ENCODE measurements at regions of chr15 and their contacts with region 1.

Region 1: DNA sequence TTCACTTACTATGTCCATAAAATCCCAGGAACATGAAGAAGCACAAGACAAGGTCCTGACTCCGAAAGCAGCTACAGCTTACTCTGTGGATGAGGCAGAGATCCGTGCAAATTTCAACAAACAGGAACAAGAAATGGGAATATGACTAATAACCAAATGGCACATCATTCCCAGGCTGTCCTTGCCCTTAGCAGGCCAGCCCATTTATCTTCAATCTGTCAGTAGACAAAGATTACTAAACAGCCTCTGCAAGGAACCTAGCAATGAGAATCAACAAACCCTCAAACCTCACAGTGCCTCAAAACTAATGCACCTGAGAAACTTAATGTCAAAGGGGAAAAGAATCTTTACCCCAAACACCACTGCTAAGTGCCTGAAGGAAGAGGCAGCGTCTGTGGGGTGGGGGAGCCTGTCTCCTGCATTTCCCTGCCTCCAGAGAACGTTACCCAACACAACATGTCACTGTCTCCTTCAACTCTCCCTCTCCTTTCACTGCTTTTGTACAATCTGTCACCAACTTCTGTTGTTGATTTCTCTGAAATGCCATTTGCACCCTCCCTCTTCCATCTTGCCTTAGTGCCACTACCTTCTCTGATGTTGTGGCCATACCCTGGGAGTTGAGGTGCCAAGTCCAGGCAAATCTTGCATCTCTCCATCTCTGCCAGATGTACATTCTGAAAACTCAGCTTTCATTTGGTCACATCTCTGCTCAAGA is 4.8 kb downstream of the TNFAIP8L3 start:
- DNase-seq: no peak
- CTCF ChIP-seq: no peak

Region 2: DNA sequence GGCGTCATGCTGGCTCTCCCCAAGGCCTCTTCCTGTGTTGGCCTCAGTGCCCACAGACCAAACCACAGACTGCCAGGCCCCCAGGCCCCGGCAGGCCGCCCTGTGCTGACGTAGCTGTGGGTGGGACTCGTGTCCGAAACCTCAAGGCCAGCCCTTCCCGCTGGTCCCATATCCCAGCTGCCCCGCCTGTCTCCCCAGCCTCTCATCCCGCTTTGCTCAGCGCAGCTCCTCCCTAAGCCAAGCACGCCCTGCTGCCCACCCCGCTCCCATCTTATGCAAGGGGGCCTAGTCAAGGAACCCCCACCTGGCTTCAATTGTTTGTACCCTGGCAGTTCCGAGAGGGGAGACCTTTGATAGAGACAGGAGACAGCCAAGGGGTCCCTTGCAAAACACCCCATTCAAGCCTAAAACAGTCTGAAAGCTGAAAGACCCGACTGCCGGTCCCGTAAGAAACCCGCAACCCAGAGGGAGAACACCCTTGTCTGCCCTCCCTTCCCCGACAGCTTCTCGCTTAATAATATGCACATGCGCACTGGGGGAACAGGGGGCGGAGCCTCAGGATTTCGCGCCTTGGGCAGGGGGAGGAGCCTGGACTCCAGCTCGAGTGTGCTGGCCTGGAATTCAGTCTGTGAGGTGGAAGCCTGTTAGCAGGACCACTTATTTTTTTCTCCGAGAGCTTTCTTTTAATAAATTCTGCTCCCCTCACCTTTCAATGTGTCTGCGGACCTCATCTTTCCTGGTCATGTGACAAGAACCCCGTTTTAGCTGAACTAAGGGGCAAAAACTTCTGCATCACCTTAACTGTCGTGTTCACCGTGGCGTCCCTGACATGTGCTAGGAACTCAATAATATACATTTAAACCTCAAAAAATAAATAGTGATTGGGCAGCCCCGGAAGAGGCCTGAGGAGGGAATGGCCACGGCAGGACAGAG is 12.4 kb before region 1 on chr15:
- CTCF ChIA-PET with region 1: interaction called, 14 read pairs
- POLR2A ChIA-PET with region 1: no interaction called
- DNase-seq: peak; percentile 81
- CTCF ChIP-seq: no peak

Region 3: GRCh38 chr15:51104512-51104911 is 14.6 kb after region 1 on chr15:
- CTCF ChIA-PET with region 1: no interaction called
- POLR2A ChIA-PET with region 1: no interaction called
- DNase-seq: no peak
- CTCF ChIP-seq: no peak

Measured in GM10248 (cell line).